Caco-2 (cell line): ENCODE measurements at regions of chr1 and their contacts with region 1.

Region 1: GRCh38 chr1:76697361-76697760 is 169.9 kb upstream of the ST6GALNAC5 start:
- DNase-seq: no peak
- H3K4me3 ChIP-seq: no peak overlapping the region
- H3K4me3 Mint-ChIP-seq: no peak overlapping the region
- H3K27ac Mint-ChIP-seq: no peak overlapping the region
- H3K4me1 ChIP-seq: no peaks in the 10 kb centered on the region
- H3K4me1 Mint-ChIP-seq: no peaks in the 10 kb centered on the region
- H3K27me3 ChIP-seq: no peaks in the 10 kb centered on the region
- H3K27me3 Mint-ChIP-seq: peaks cover 4% of the 10 kb centered on the region
- CTCF ChIP-seq: no peak

Region 2: GRCh38 chr1:76547916-76548315 is 149.4 kb before region 1 on chr1:
- CTCF ChIA-PET with region 1: no interaction called
- POLR2A ChIA-PET with region 1: no interaction called
- intact Hi-C with region 1: loop called (anchors 2 kb)
- DNase-seq: peak; percentile 27 to 45
- H3K4me3 ChIP-seq: no peak overlapping the region
- H3K4me3 Mint-ChIP-seq: no peak overlapping the region
- H3K27ac Mint-ChIP-seq: no peak overlapping the region
- H3K4me1 ChIP-seq: no peaks in the 10 kb centered on the region
- H3K4me1 Mint-ChIP-seq: peaks cover 6% of the 10 kb centered on the region
- H3K27me3 ChIP-seq: no peaks in the 10 kb centered on the region
- H3K27me3 Mint-ChIP-seq: no peaks in the 10 kb centered on the region
- CTCF ChIP-seq: no peak

Region 3: DNA sequence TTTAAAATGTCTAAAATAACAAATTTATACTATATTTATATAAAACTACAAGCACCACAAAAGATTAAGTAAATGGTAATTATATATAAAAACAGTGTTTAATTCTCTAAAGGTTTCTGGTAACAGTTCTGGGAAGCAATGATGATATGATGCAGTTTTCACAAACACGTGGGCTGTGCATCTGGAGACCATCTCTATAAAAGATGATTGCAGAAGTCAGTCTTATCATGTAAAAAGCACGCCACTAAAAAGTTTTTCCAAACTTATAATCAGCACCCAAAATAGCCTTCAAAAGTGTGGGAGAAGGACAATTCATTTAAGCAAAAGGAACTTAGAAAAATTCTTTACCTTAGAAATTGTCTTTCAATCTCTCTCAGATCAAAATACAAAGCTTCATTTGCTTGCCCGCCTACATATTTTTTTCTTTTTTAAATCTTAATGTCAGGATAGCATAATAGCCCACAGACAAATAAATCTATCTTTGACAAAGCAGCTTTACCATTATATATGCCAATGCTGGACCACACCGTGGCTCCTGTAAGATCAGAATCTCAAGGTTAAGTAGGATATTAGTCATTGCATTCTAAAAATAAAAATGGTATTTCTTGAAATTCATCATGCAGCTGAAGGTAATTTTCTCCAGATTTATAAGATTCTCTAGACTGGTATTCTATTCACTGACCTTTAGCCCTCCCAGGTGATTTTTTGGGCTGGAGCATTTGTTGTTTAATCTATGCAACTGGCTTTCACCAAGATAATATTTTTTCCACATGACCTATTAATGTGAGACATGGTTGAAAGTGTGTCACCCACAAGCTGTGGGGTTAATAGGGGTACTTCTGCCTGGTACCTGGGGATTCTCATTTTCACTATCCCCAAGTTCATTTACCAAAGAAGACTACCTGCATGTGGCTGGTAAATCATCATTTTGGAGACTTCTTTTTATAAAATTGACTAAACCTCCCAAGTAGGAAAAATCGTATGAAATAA is 19.6 kb before region 1 on chr1:
- CTCF ChIA-PET with region 1: no interaction called
- POLR2A ChIA-PET with region 1: no interaction called
- intact Hi-C with region 1: no loop called
- DNase-seq: no peak
- H3K4me3 ChIP-seq: no peak overlapping the region
- H3K4me3 Mint-ChIP-seq: no peak overlapping the region
- H3K27ac Mint-ChIP-seq: no peak overlapping the region
- H3K4me1 ChIP-seq: peaks cover 4% of the 10 kb centered on the region; the same call in 1 of the 2 replicates
- H3K4me1 Mint-ChIP-seq: no peaks in the 10 kb centered on the region
- H3K27me3 ChIP-seq: no peaks in the 10 kb centered on the region
- H3K27me3 Mint-ChIP-seq: peaks cover 8% of the 10 kb centered on the region
- CTCF ChIP-seq: no peak